ENCODE measurements at regions of chr10 and their contacts with region 1.

Region 1: GRCh38 chr10:118568327-118568848 is 27.1 kb downstream of the PRLHR start:
- DNase-seq: peak; percentile 52 to 81 (median 67)
- H3K4me3 ChIP-seq: peak overlapping the region in 1 of 7 experiments; percentile 28
- H3K27ac ChIP-seq: no peak overlapping the region
- H3K4me1 ChIP-seq: no peaks in the 10 kb centered on the region
- H3K27me3 ChIP-seq: peaks cover 0 to 6% (median 2%) of the 10 kb centered on the region in 5 experiments

Region 2: GRCh38 chr10:118584181-118584954 is 16.0 kb after region 1 on chr10:
- CTCF ChIA-PET with region 1: interaction called, 11 read pairs
- POLR2A ChIA-PET with region 1: no interaction called
- DNase-seq: no peak
- H3K4me3 ChIP-seq: no peak overlapping the region
- H3K27ac ChIP-seq: no peak overlapping the region
- H3K4me1 ChIP-seq: no peaks in the 10 kb centered on the region
- H3K27me3 ChIP-seq: peaks cover 0 to 42% (median 11%) of the 10 kb centered on the region in 5 experiments

Region 3: GRCh38 chr10:118720685-118721538 is 152.5 kb after region 1 on chr10:
- CTCF ChIA-PET with region 1: interaction called, 27 read pairs
- POLR2A ChIA-PET with region 1: no interaction called
- DNase-seq: peak; percentile 47 to 71 (median 56)
- H3K4me3 ChIP-seq: no peak overlapping the region
- H3K27ac ChIP-seq: no peak overlapping the region
- H3K4me1 ChIP-seq: no peaks in the 10 kb centered on the region
- H3K27me3 ChIP-seq: no peaks in the 10 kb centered on the region

Region 4: GRCh38 chr10:118800920-118801319 is 232.5 kb after region 1 on chr10:
- CTCF ChIA-PET with region 1: interaction called, 78 read pairs
- POLR2A ChIA-PET with region 1: no interaction called
- DNase-seq: peak; percentile 37 to 64 (median 58)
- H3K4me3 ChIP-seq: no peak overlapping the region
- H3K27ac ChIP-seq: no peak overlapping the region
- H3K4me1 ChIP-seq: no peaks in the 10 kb centered on the region
- H3K27me3 ChIP-seq: peaks cover 0 to 24% (median 6%) of the 10 kb centered on the region in 5 experiments

Measured in common myeloid progenitor, CD34-positive (primary cell).